Left cardiac atrium (tissue), 4 donors: ENCODE measurements at regions of chr21 and their contacts with region 1.

Region 1: DNA sequence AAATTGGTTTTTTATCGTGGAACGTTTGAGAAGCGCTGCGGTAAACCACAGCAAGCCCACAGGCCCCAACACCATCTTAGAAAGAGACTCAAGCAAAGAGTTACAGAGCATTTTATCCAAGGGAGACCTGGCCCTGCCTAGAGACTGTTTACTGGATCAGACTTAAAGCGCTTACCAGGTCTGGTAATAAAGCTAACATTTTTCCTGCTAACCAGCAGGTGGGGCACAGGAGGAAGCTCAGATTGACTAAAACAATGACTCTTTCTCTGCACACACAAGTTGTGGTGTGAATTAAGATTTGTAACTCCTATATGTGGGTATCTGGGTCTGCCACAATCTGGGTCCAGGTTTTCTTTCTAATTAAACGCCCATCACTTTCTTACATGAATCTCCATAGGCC is 136.6 kb upstream of the ETS2 start:
- DNase-seq: no peak
- ATAC-seq: no peak

Region 2: GRCh38 chr21:38925923-38926322 is 256.7 kb after region 1 on chr21:
- intact Hi-C with region 1: no loop called
- DNase-seq: peak; percentile 71
- ATAC-seq: peak; percentile 92 to 93

Region 3: GRCh38 chr21:39137248-39138178 is 468.3 kb after region 1 on chr21:
- intact Hi-C with region 1: loop called in 1 of 2 experiments (anchors 5 kb)
- DNase-seq: no peak
- ATAC-seq: peak; percentile 38 to 80